Heart left ventricle (tissue), 16 donors: ENCODE measurements at regions of chr2 and their contacts with region 1.

Region 1: DNA sequence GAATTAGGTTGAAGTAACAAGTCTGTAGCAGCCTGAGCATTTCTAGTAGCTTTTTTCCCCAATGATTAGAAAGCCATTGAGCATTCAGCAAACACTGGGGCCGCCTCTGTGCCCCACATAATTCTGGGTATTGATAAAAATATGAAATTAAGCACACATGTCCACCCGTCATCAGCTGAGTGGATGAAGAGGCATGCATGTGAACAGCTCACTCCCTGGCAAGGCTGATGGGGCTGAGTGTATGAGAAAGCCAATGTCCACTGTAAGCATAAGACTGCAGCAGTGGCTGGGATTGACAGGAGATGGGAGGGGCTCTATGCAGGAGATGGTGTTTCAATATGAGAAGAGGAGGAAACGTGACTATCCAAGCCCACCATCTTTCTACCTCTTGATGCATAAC is 124.4 kb upstream of the KLHL29 start:
- DNase-seq: no peak
- ATAC-seq: no peak
- H3K4me3 ChIP-seq: no peak overlapping the region
- H3K27ac ChIP-seq: no peak overlapping the region
- H3K4me1 ChIP-seq: no peaks in the 10 kb centered on the region
- H3K27me3 ChIP-seq: no peaks in the 10 kb centered on the region
- CTCF ChIP-seq: no peak
- POLR2A ChIP-seq: no peak

Region 2: DNA sequence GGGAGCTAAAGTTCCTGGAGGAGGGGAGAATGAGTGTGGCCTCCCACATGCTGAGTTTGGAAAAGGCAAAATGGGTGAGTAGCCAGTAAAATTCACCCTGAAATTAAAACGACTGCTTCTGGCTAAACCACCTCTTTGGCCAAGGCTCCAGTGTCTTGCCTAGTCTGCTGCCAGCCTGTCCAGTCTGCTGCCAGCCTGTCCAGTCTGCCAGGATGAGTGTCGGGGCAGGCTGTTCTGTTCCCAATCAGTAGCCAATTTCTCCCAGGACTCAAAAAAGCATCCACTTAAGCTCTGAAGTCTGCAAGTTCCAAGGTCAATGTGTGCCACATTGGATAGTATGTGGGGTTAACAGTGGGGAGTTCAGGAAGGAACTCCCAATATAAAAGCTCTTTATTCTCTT is 10.2 kb before region 1 on chr2:
- intact Hi-C with region 1: loop called in 1 of 10 experiments (anchors 1 kb)
- DNase-seq: no peak
- ATAC-seq: peak; percentile 39 to 85 (median 68)
- H3K4me3 ChIP-seq: no peak overlapping the region
- H3K27ac ChIP-seq: no peak overlapping the region
- H3K4me1 ChIP-seq: peaks cover 0 to 20% (median 0%) of the 10 kb centered on the region in 12 donors
- H3K27me3 ChIP-seq: no peaks in the 10 kb centered on the region
- CTCF ChIP-seq: no peak
- POLR2A ChIP-seq: no peak